ENCODE measurements at regions of chr1 and their contacts with region 1.

Region 1: DNA sequence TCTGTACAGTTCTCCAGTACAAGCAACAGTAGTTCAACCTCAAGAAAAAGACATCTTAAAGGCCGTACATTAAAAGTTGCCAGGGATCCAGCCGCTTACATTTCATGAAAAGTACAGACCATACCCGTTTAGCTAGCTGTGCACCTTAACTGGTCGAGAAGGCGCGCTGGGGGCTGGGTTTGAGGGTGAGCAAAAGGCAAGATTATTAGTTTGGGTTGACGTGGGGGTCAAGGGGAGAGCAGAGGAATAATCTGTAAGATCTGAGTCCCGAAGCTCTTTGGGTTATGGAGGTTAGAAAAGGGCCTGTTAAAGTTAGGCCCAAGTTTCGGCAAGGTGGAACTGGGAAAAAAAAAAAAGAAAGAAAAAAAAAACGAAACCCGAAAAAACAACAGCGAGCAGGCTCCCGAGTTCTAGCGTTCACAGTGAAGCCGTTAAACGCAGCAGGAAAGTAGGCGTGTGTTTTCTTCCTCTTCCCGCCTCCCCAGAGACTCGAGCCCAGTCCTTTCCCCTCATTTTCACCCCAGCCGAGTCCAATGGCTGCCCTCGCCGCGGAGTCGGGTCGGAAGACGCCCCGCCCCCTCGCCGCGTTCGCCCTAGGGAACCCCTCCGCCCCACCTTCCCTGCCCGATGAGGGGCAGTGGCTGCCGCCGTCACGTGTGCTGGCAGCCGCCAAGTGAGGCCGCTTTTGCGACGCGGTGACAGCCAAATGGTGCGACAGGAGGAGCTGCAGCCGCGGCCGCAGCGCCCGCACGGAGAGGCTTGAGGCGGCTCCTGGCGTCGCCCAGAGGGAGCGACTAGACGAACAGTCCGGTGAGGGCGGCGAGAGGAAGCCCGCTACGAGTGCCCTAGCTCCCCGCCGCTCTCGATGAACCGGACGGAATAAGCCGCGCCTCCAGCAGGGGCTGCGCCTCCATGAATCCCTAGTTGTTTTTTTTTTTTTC is at the start of gene PKN2:
- DNase-seq: peak; percentile 98
- H3K4me3 Mint-ChIP-seq: peak within 1 kb of the TSS; percentile 92
- H3K27ac Mint-ChIP-seq: peak within 1 kb of the TSS; percentile 95
- H3K4me1 Mint-ChIP-seq: peaks cover 22% of the 10 kb centered on the region
- H3K27me3 Mint-ChIP-seq: no peaks in the 10 kb centered on the region
- total RNA-seq, gene PKN2: 16.2 to 17.9 TPM

Region 2: GRCh38 chr1:87328272-87329050 is 1355.3 kb before region 1 on chr1 and contains the start of gene LMO4:
- CTCF ChIA-PET with region 1: no interaction called
- POLR2A ChIA-PET with region 1: no interaction called
- intact Hi-C with region 1: loop called (anchors 1 kb)
- DNase-seq: peak; percentile 93
- H3K4me3 Mint-ChIP-seq: peak within 1 kb of the TSS; percentile 89
- H3K27ac Mint-ChIP-seq: peak within 1 kb of the TSS; percentile 85
- H3K4me1 Mint-ChIP-seq: peaks cover 33% of the 10 kb centered on the region
- H3K27me3 Mint-ChIP-seq: peaks cover 8% of the 10 kb centered on the region
- total RNA-seq, gene LMO4: 23.0 to 24.1 TPM

Region 3: GRCh38 chr1:88661951-88662699 is 21.7 kb before region 1 on chr1:
- CTCF ChIA-PET with region 1: interaction called, 6 read pairs
- POLR2A ChIA-PET with region 1: interaction called, 4 read pairs
- intact Hi-C with region 1: loop called (anchors 1 kb)
- DNase-seq: no peak
- H3K4me3 Mint-ChIP-seq: no peak overlapping the region
- H3K27ac Mint-ChIP-seq: no peak overlapping the region
- H3K4me1 Mint-ChIP-seq: peaks cover 29% of the 10 kb centered on the region
- H3K27me3 Mint-ChIP-seq: peaks cover 2% of the 10 kb centered on the region

Region 4: GRCh38 chr1:88708021-88708420 is 24.2 kb after region 1 on chr1:
- CTCF ChIA-PET with region 1: no interaction called
- POLR2A ChIA-PET with region 1: no interaction called
- intact Hi-C with region 1: no loop called
- DNase-seq: no peak
- H3K4me3 Mint-ChIP-seq: no peak overlapping the region
- H3K27ac Mint-ChIP-seq: no peak overlapping the region
- H3K4me1 Mint-ChIP-seq: peaks cover 9% of the 10 kb centered on the region
- H3K27me3 Mint-ChIP-seq: no peaks in the 10 kb centered on the region

Region 5: GRCh38 chr1:88773540-88774150 is 89.8 kb after region 1 on chr1:
- CTCF ChIA-PET with region 1: no interaction called
- POLR2A ChIA-PET with region 1: no interaction called
- intact Hi-C with region 1: loop called (anchors 10 kb)
- DNase-seq: peak; percentile 34
- H3K4me3 Mint-ChIP-seq: no peak overlapping the region
- H3K27ac Mint-ChIP-seq: peak overlapping the region; percentile 75
- H3K4me1 Mint-ChIP-seq: peaks cover 20% of the 10 kb centered on the region
- H3K27me3 Mint-ChIP-seq: no peaks in the 10 kb centered on the region

Region 6: GRCh38 chr1:88891318-88891950 is 207.6 kb after region 1 on chr1 and contains the start of gene GTF2B:
- CTCF ChIA-PET with region 1: interaction called, 3 read pairs
- POLR2A ChIA-PET with region 1: interaction called, 19 read pairs
- intact Hi-C with region 1: loop called (anchors 1 kb)
- DNase-seq: peak; percentile 97
- H3K4me3 Mint-ChIP-seq: peak within 1 kb of the TSS; percentile 81
- H3K27ac Mint-ChIP-seq: peak within 1 kb of the TSS; percentile 84
- H3K4me1 Mint-ChIP-seq: peaks cover 41% of the 10 kb centered on the region
- H3K27me3 Mint-ChIP-seq: peaks cover 2% of the 10 kb centered on the region
- total RNA-seq, gene GTF2B: 34.2 to 39.4 TPM

Region 7: GRCh38 chr1:89994805-89995597 is 1311.2 kb after region 1 on chr1 and contains the start of gene ZNF326:
- CTCF ChIA-PET with region 1: no interaction called
- POLR2A ChIA-PET with region 1: no interaction called
- intact Hi-C with region 1: loop called (anchors 10 kb)
- DNase-seq: peak; percentile 96
- H3K4me3 Mint-ChIP-seq: peak within 1 kb of the TSS; percentile 99
- H3K27ac Mint-ChIP-seq: peak within 1 kb of the TSS; percentile 89
- H3K4me1 Mint-ChIP-seq: peaks cover 39% of the 10 kb centered on the region
- H3K27me3 Mint-ChIP-seq: no peaks in the 10 kb centered on the region
- total RNA-seq, gene ZNF326: 17.2 to 17.3 TPM